Posterior cingulate gyrus (tissue), 11 donors: ENCODE measurements at regions of chr12 and their contacts with region 1.

Region 1: GRCh38 chr12:6195665-6196535 is 4.3 kb upstream of the CD9 start:
- DNase-seq: peak; percentile 69 to 96 (median 87)

Region 2: GRCh38 chr12:6062757-6063735 is 132.9 kb before region 1 on chr12:
- intact Hi-C with region 1: loop called (anchors 5 kb)
- DNase-seq: peak in 9 of 10 donors; percentile 29 to 94 (median 68)

Region 3: GRCh38 chr12:6230321-6231110 is 34.6 kb after region 1 on chr12:
- intact Hi-C with region 1: loop called (anchors 1 kb)
- DNase-seq: peak; percentile 77 to 98 (median 89)

Region 4: DNA sequence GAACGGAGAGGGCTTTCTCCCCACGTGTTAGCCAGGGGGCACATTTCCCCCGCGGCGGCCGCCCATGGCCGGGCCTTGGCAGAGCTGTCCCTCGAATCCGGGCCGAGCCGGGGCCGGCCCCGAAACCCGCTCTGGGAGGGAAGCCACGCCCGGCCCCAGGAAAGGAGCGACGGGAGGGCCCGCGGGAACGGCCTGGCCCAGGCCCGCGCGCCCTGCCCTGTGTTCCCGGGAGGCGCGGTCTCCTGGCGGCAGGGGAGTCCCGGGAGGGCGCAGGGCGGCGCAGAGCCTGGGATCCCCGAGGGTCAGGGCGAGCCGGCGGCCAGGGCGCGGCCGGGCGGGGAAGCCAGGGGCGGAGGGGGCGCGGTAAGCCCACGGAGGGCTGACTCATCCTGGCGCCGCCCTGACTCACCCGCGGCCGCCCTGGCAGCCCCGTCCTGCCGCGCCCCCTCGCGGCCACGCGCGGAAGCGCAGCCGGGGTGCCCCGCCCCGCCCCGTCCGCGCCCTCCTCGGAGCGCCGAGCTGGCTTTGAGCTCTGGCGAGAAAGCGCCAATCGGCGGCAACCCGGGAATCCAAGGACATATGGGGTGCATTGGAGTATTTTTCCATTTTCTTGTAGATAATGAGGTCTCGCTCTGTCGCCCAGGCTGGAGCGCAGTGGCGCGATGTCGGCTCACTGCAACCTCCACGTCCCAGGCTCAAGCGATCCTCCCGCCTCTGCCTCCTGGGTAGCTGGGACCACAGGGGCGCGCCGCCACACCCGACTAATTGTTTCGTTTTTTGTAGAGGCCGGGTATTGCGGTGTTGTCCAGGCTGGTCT is 82.7 kb after region 1 on chr12:
- intact Hi-C with region 1: loop called (anchors 1 kb)
- DNase-seq: peak; percentile 50 to 97 (median 71)